ENCODE measurements at regions of chr3 and their contacts with region 1.

Region 1: GRCh38 chr3:140499114-140499757 is 178.6 kb upstream of the TRIM42 start:
- DNase-seq: peak in 1 of 2 experiments; percentile 10
- H3K4me3 ChIP-seq: no peak overlapping the region
- H3K4me3 Mint-ChIP-seq: no peak overlapping the region
- H3K27ac Mint-ChIP-seq: no peak overlapping the region
- H3K4me1 ChIP-seq: no peaks in the 10 kb centered on the region; the same call in 1 of the 2 replicates
- H3K4me1 Mint-ChIP-seq: peaks cover 6% of the 10 kb centered on the region
- H3K27me3 ChIP-seq: no peaks in the 10 kb centered on the region
- H3K27me3 Mint-ChIP-seq: peaks cover 5% of the 10 kb centered on the region
- CTCF ChIP-seq: peak; percentile 27 to 37

Region 2: DNA sequence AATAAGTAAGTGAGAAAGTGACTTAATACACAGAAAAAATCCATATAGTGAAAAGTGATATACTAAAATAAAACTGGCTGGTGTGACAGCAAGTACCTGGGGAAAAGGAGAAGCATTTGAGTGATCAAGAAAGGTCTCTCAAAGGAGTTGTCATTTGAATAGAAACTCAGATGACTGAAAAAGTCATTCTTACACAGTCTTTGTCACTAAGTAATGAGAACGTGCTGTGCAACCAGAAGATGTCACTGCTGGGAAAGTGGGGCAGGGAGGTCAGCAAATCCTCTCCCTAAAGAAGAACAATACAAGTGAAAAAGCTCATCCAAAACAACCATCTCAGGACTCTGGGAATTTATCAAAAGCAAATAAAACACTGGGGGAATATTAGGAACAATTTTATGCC is 138.9 kb before region 1 on chr3:
- CTCF ChIA-PET with region 1: no interaction called
- POLR2A ChIA-PET with region 1: no interaction called
- intact Hi-C with region 1: loop called (anchors 1 kb)
- DNase-seq: no peak
- H3K4me3 ChIP-seq: no peak overlapping the region
- H3K4me3 Mint-ChIP-seq: no peak overlapping the region
- H3K27ac Mint-ChIP-seq: no peak overlapping the region
- H3K4me1 ChIP-seq: no peaks in the 10 kb centered on the region
- H3K4me1 Mint-ChIP-seq: no peaks in the 10 kb centered on the region
- H3K27me3 ChIP-seq: no peaks in the 10 kb centered on the region
- H3K27me3 Mint-ChIP-seq: no peaks in the 10 kb centered on the region
- CTCF ChIP-seq: peak in 1 of 2 experiments; percentile 15

Region 3: DNA sequence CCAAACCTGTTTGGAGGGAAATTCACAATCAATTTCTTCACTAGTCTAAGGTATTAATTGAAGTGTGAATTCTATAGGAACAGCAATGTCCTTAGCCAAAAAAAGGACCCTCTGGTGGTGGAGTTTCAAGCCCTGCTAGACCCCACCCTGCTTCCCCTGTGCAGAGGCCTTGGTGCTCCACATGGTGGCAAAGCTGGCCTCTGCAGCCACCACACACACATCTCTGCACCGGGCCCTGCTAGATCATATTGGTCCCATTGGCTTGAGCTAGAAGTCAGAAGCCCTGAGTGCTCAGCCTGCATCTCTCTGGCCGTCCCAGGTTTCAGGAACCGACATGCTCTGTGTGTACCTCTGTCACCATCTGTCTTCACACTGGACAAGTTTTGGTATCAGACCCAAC is 42.3 kb before region 1 on chr3:
- CTCF ChIA-PET with region 1: no interaction called
- POLR2A ChIA-PET with region 1: no interaction called
- intact Hi-C with region 1: loop called (anchors 1 kb)
- DNase-seq: no peak
- H3K4me3 ChIP-seq: no peak overlapping the region
- H3K4me3 Mint-ChIP-seq: no peak overlapping the region
- H3K27ac Mint-ChIP-seq: no peak overlapping the region
- H3K4me1 ChIP-seq: no peaks in the 10 kb centered on the region
- H3K4me1 Mint-ChIP-seq: peaks cover 6% of the 10 kb centered on the region
- H3K27me3 ChIP-seq: no peaks in the 10 kb centered on the region; the same call in 1 of the 2 replicates
- H3K27me3 Mint-ChIP-seq: no peaks in the 10 kb centered on the region
- CTCF ChIP-seq: no peak

Region 4: DNA sequence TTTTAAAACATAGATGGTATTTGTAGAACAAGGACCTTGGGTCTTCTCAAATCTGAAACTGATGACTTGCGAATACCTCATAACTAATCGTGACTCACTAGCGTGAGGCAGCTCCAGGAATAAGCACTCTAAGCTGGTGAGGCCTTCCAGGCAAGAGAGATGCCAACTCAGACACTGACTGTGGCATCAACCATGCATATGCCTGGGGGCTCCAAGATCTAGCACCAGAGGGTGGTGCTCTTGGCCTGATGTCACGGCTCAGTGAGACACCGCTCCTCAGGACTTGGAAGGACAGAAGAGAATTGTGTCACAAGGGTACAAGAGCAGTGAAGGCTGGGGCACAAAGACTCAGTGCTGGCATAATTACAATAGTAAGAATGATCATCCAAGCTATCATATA is 53.7 kb after region 1 on chr3:
- CTCF ChIA-PET with region 1: no interaction called
- POLR2A ChIA-PET with region 1: no interaction called
- intact Hi-C with region 1: no loop called
- DNase-seq: no peak
- H3K4me3 ChIP-seq: no peak overlapping the region
- H3K4me3 Mint-ChIP-seq: no peak overlapping the region
- H3K27ac Mint-ChIP-seq: no peak overlapping the region
- H3K4me1 ChIP-seq: no peaks in the 10 kb centered on the region; the same call in 1 of the 2 replicates
- H3K4me1 Mint-ChIP-seq: no peaks in the 10 kb centered on the region
- H3K27me3 ChIP-seq: no peaks in the 10 kb centered on the region
- H3K27me3 Mint-ChIP-seq: no peaks in the 10 kb centered on the region
- CTCF ChIP-seq: no peak

Region 5: GRCh38 chr3:140686948-140687347 is 187.7 kb after region 1 on chr3:
- CTCF ChIA-PET with region 1: no interaction called
- POLR2A ChIA-PET with region 1: no interaction called
- intact Hi-C with region 1: no loop called
- DNase-seq: no peak
- H3K4me3 ChIP-seq: no peak overlapping the region
- H3K4me3 Mint-ChIP-seq: no peak overlapping the region
- H3K27ac Mint-ChIP-seq: no peak overlapping the region
- H3K4me1 ChIP-seq: no peaks in the 10 kb centered on the region
- H3K4me1 Mint-ChIP-seq: no peaks in the 10 kb centered on the region
- H3K27me3 ChIP-seq: no peaks in the 10 kb centered on the region
- H3K27me3 Mint-ChIP-seq: no peaks in the 10 kb centered on the region
- CTCF ChIP-seq: no peak

Region 6: DNA sequence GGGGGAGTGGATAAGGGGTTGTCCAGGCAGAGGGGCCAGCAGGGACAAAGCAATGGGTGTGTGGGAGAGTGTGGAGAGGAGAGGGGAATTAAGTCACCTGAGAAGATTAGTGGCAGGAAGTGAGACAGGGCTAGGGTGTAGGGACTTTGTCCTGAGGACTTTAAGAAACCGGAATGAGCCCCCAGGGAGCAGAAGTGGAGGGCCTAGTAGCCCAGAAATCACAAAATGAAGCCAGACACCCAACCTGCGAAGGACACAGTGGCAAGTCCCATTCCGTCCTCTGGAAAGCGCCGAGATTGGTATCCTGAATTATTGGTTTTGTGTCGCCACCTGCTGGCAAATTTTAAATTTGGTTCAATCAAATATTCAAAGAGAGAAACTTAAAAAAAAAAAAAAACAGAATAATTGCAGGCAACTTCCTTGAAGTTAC is 364.4 kb after region 1 on chr3:
- CTCF ChIA-PET with region 1: no interaction called
- POLR2A ChIA-PET with region 1: no interaction called
- intact Hi-C with region 1: loop called (anchors 5 kb)
- DNase-seq: peak; percentile 46 to 73
- H3K4me3 ChIP-seq: no peak overlapping the region
- H3K4me3 Mint-ChIP-seq: no peak overlapping the region
- H3K27ac Mint-ChIP-seq: no peak overlapping the region
- H3K4me1 ChIP-seq: no peaks in the 10 kb centered on the region
- H3K4me1 Mint-ChIP-seq: peaks cover 8% of the 10 kb centered on the region
- H3K27me3 ChIP-seq: no peaks in the 10 kb centered on the region
- H3K27me3 Mint-ChIP-seq: peaks cover 8% of the 10 kb centered on the region
- CTCF ChIP-seq: peak; percentile 33 to 50